ENCODE measurements at regions of chr14 and their contacts with region 1.

Region 1: DNA sequence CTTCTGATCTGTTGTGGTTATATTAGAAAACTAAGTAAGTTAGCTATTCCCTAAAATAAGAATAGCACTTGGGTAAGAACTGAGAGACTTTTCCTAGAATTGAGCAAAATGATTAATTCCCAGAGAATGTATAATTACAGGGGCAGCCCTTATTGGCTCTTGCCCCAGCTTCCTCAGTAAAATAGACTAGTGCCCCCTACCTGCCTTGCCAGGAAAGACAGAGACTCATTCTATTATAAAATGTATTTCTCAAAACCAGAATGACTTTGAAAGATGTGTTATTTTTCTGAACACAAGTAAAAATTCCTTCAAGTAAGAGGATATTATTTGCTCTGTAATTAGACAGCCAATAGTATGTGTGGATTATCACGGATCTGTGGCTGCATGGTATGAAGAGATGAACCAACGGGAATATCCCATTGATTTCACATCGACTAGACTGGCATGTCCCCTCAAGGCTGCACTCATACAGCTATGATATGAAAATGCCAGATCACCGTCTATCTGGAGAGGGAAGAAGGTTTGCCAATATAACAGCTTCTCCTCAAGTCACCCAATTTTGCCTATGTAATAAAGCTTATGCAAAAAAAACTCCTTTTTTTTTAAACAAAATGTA is 7.4 kb upstream of the GLRX5 start:
- H3K4me3 Mint-ChIP-seq: no peak overlapping the region
- H3K27ac Mint-ChIP-seq: peak overlapping the region; percentile 39
- H3K4me1 Mint-ChIP-seq: peaks cover 63% of the 10 kb centered on the region
- H3K27me3 Mint-ChIP-seq: no peaks in the 10 kb centered on the region

Region 2: DNA sequence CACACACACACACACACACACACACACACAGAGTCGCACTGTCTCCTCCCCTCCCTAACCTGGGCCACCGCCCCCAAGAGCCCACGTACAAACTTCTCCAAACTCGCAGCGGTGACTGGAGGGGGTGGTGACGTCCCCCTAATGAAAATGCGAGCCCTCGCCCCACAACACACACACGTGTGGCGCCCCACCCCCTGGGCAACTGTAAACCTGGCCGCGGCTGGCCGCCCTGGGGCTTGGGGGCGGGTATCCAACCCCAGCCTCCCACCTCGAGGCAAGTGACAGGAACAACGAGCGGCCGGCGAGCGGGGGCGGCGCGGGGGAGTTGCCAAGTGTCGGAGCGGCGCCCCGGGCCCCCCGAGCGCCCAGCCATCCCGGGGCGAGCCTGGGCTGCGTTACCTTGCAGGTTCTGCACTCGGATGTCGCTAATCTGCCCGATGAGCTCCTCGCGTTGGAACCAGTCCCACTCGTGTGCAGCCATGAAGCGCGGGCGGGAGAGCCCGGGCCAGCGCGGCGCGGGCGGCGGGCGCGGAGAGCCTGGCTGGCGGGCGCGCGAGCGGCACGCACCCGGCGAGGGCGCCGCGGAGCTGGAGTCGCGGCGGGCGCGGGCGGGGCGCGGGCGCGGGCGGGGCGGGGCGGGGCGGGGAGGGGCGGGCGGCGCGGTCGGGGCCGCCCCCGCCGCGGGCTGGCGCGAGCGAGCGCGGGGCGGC is 208.0 kb before region 1 on chr14 and contains the start of gene CLMN:
- intact Hi-C with region 1: loop called (anchors 10 kb)
- H3K4me3 Mint-ChIP-seq: peak within 1 kb of the TSS; percentile 85
- H3K27ac Mint-ChIP-seq: peak within 1 kb of the TSS; percentile 79
- H3K4me1 Mint-ChIP-seq: peaks cover 89% of the 10 kb centered on the region
- H3K27me3 Mint-ChIP-seq: peaks cover 7% of the 10 kb centered on the region

Region 3: GRCh38 chr14:95442633-95443021 is 84.9 kb before region 1 on chr14:
- intact Hi-C with region 1: loop called (anchors 1 kb)
- H3K4me3 Mint-ChIP-seq: no peak overlapping the region
- H3K27ac Mint-ChIP-seq: no peak overlapping the region
- H3K4me1 Mint-ChIP-seq: no peaks in the 10 kb centered on the region
- H3K27me3 Mint-ChIP-seq: no peaks in the 10 kb centered on the region

Region 4: GRCh38 chr14:95460647-95461478 is 66.6 kb before region 1 on chr14:
- intact Hi-C with region 1: no loop called
- H3K4me3 Mint-ChIP-seq: no peak overlapping the region
- H3K27ac Mint-ChIP-seq: no peak overlapping the region
- H3K4me1 Mint-ChIP-seq: no peaks in the 10 kb centered on the region
- H3K27me3 Mint-ChIP-seq: no peaks in the 10 kb centered on the region

Region 5: GRCh38 chr14:95483309-95484165 is 44.0 kb before region 1 on chr14:
- intact Hi-C with region 1: loop called (anchors 5 kb)
- H3K4me3 Mint-ChIP-seq: no peak overlapping the region
- H3K27ac Mint-ChIP-seq: peak overlapping the region; percentile 63
- H3K4me1 Mint-ChIP-seq: peaks cover 81% of the 10 kb centered on the region
- H3K27me3 Mint-ChIP-seq: no peaks in the 10 kb centered on the region

Measured in dendritic cell treated with granulocyte-macrophage colony-stimulating factor and Interleukin-4, amounts not matched to agents 40 ng/mL and 50 ng/mL, for 4 days (primary cell).